ENCODE measurements at regions of chr3 and their contacts with region 1.

Region 1: GRCh38 chr3:31247850-31248562 is 284.7 kb upstream of the STT3B start:
- DNase-seq: peak; percentile 52
- ATAC-seq: peak; percentile 21
- H3K4me3 Mint-ChIP-seq: no peak overlapping the region
- H3K27ac Mint-ChIP-seq: peak overlapping the region; percentile 51
- H3K4me1 Mint-ChIP-seq: peaks cover 53% of the 10 kb centered on the region
- H3K27me3 Mint-ChIP-seq: peaks cover 3% of the 10 kb centered on the region

Region 2: GRCh38 chr3:31288641-31289100 is 40.7 kb after region 1 on chr3:
- CTCF ChIA-PET with region 1: no interaction called
- POLR2A ChIA-PET with region 1: no interaction called
- intact Hi-C with region 1: loop called in 1 of 2 experiments (anchors 5 kb)
- DNase-seq: peak; percentile 65
- ATAC-seq: peak; percentile 74
- H3K4me3 Mint-ChIP-seq: no peak overlapping the region
- H3K27ac Mint-ChIP-seq: no peak overlapping the region
- H3K4me1 Mint-ChIP-seq: peaks cover 19% of the 10 kb centered on the region
- H3K27me3 Mint-ChIP-seq: no peaks in the 10 kb centered on the region

Region 3: DNA sequence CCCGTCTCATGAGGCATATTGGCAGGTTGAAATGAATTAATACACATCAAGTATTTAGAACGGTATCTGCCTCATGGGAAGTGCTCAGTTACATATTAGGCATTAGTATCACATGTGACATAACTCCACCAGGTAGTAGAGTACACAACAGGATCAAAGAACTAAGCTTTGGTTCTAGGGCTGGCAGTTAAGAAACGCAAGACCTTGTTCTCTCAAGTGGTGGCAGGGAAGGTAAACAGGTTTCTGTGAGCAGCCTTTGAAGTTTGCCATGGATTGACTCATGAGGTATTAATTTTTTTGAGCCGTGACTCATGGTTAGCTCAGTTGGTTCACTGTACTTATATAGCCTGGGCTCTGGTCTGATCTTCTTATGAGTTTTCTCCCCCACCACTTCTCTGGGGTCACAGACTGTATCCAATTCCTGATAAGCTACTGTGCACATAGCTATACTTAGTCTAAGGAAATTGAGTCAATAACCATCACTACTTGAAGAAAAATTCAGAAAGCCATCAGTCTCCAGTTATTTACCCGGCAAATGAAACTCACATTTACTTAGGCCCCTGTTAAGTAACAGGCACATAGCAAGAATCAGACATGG is 129.1 kb after region 1 on chr3:
- CTCF ChIA-PET with region 1: no interaction called
- POLR2A ChIA-PET with region 1: no interaction called
- intact Hi-C with region 1: loop called in 1 of 2 experiments (anchors 5 kb)
- DNase-seq: peak; percentile 31
- ATAC-seq: peak; percentile 97
- H3K4me3 Mint-ChIP-seq: no peak overlapping the region
- H3K27ac Mint-ChIP-seq: no peak overlapping the region
- H3K4me1 Mint-ChIP-seq: peaks cover 15% of the 10 kb centered on the region
- H3K27me3 Mint-ChIP-seq: no peaks in the 10 kb centered on the region

Region 4: DNA sequence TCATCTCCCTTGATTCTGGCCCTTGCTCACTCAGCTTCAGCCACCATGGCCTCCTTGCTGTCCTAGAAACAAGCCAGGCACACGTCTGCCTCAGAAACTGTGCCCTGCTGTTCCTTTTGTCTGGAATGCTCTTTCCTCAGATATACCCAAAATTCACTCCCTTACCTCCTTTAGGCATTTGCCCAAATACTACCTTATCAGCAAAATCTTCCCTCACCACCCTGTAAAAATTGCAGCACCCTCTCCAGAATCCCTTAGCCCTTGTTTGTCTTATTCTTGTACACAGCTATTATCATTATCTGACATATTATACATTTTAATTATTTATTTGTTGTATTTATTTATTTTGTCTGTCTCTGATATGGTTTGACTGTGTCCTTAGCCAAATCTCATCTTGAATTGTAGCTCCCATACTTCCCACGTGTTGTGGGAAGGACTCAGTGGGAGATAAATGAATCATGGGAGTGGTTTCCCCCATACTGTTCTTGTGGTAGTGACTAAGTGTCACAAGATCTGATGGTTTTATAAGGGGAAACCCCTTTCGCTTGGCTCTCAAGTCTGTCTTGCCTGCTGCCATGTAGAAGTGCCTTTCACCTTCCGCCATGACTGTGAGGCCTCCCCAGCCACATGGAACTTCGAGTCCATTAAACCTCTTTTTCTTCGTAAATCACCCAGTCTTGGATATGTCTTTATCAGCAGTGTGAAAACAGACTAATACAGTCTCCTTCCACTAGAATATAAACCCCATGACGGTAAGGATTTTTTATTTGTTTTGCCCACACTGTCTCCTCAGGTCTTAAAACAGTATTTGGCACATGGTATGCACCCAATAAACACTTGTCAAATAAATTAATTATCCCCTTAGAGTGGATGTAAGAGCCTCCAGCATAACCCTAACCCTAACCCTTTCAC is 224.7 kb after region 1 on chr3:
- CTCF ChIA-PET with region 1: no interaction called
- POLR2A ChIA-PET with region 1: no interaction called
- intact Hi-C with region 1: loop called (anchors 2 to 5 kb)
- DNase-seq: peak; percentile 65
- ATAC-seq: peak; percentile 95
- H3K4me3 Mint-ChIP-seq: no peak overlapping the region
- H3K27ac Mint-ChIP-seq: peak overlapping the region; percentile 41
- H3K4me1 Mint-ChIP-seq: peaks cover 19% of the 10 kb centered on the region
- H3K27me3 Mint-ChIP-seq: no peaks in the 10 kb centered on the region

Region 5: DNA sequence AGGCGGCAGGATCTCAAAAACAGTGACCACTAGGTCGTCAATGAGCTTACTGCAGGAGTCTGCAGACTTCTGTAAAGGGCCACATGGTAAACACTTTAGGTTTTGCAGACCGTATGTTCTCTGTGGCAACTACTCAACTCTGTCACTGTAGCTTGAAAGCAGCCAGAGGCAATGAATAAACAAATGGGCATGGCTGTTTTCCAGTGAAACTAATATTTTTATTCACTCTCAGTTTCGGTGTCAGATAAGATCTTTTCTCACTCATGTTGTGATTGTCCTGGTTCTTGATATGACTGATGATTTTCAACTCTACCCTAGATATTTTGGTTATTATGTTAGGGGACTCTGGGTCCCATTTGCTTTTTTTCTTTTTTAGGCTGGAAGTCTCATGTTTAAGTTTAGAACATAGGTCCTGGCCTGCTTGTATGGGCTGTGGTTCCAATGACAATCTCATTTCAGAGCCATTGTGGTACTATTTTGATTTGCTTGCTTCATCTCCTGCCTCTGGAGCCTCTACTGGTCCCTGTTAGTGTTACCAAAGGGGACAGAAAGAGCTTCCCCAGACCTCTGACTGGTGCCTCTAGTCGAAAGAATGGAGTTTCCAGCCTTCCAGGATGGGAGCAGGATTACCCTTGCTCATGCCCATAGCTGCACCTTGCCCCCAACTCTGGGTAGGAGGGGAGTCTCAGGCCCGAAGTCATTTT is 506.7 kb after region 1 on chr3:
- CTCF ChIA-PET with region 1: no interaction called
- POLR2A ChIA-PET with region 1: no interaction called
- intact Hi-C with region 1: loop called (anchors 2 to 5 kb)
- DNase-seq: no peak
- ATAC-seq: peak; percentile 57
- H3K4me3 Mint-ChIP-seq: no peak overlapping the region
- H3K27ac Mint-ChIP-seq: peak overlapping the region; percentile 95
- H3K4me1 Mint-ChIP-seq: peaks cover 48% of the 10 kb centered on the region
- H3K27me3 Mint-ChIP-seq: peaks cover 2% of the 10 kb centered on the region